ENCODE measurements at regions of chr10 and their contacts with region 1.

Region 1: DNA sequence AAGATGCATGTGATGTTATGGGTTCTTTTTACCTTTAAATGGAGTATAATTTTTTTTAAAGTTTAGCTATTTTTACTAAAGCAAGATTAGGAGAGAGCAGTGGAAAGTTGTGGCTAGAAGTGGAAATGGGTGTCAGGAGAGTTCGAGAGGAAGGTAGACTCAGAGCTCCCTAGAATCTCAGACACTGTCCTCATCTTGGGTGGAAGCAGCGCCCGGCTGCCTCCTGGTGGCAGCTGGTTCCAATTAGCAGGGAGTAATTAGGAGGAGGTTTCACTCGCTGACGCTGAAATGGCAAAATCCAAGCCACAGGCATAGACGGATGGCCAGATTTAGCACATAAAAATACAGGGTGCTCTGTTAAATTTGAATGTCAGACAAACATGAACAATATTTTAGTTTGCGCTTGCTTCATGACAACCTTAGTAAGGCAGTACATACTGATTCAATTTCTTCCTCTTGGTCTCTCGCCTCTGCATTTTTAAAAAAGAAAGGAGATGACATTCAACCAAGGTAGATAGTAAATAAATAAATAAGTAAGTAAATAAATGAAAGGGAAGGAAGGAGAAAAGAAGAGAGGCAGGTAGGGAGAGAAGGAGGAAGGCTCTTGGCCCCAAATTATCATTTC is 58.5 kb downstream of the LGI1 start:
- DNase-seq: peak; percentile 66
- H3K4me3 ChIP-seq: peak overlapping the region; percentile 24 to 50; a peak in 3 of 4 replicates
- H3K27ac ChIP-seq: peak overlapping the region in 1 of 2 experiments; percentile 95; a peak in 3 of 4 replicates
- H3K4me1 ChIP-seq: peaks cover 0 to 30% of the 10 kb centered on the region in 2 experiments; a peak in 3 of 4 replicates
- H3K27me3 ChIP-seq: no peaks in the 10 kb centered on the region
- CTCF ChIP-seq: peak; percentile 66
- EP300 ChIP-seq: peak in 1 of 2 experiments; percentile 54; a peak in 2 of 4 replicates
- RAD21 ChIP-seq: peak; percentile 58

Region 2: GRCh38 chr10:93503075-93503474 is 313.2 kb before region 1 on chr10:
- CTCF ChIA-PET with region 1: no interaction called
- POLR2A ChIA-PET with region 1: no interaction called
- DNase-seq: no peak
- H3K4me3 ChIP-seq: no peak overlapping the region
- H3K27ac ChIP-seq: 0 out of 4 replicates have a peak overlapping the region, but pooled peaks of 1 of the 2 experiments have one; percentile 8
- H3K4me1 ChIP-seq: peaks cover 0 to 4% of the 10 kb centered on the region in 2 experiments; a peak in 3 of 4 replicates
- H3K27me3 ChIP-seq: no peaks in the 10 kb centered on the region
- CTCF ChIP-seq: no peak
- EP300 ChIP-seq: no peak
- RAD21 ChIP-seq: no peak

Region 3: DNA sequence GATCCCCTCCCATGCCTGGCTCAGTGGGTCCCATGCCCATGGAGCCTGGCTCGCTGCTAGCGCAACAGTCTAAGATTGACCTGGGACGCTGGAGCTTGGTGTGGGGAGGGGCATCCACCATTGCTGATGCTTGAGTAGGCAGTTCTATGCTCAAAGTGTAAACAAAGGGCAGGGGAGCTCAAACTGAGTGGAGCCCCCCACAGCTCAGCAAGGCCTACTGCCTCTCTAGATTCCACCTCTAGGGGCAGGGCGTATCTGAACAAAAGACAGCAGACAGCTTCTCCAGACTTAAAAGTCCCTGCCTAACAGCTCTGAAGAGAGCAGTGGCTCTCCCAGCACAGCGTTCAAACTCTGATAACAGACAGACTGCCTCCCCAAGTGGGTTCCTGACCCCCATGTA is 280.9 kb before region 1 on chr10:
- CTCF ChIA-PET with region 1: no interaction called
- POLR2A ChIA-PET with region 1: no interaction called
- DNase-seq: no peak
- H3K4me3 ChIP-seq: no peak overlapping the region
- H3K27ac ChIP-seq: no peak overlapping the region
- H3K4me1 ChIP-seq: no peaks in the 10 kb centered on the region
- H3K27me3 ChIP-seq: no peaks in the 10 kb centered on the region
- CTCF ChIP-seq: no peak
- EP300 ChIP-seq: no peak
- RAD21 ChIP-seq: no peak

Region 4: GRCh38 chr10:93554760-93555432 is 261.3 kb before region 1 on chr10:
- CTCF ChIA-PET with region 1: interaction called, 18 read pairs
- POLR2A ChIA-PET with region 1: no interaction called
- DNase-seq: peak; percentile 79
- H3K4me3 ChIP-seq: no peak overlapping the region
- H3K27ac ChIP-seq: no peak overlapping the region
- H3K4me1 ChIP-seq: no peaks in the 10 kb centered on the region
- H3K27me3 ChIP-seq: no peaks in the 10 kb centered on the region
- CTCF ChIP-seq: peak; percentile 67
- EP300 ChIP-seq: no peak
- RAD21 ChIP-seq: peak; percentile 72

Region 5: GRCh38 chr10:93695740-93696139 is 120.5 kb before region 1 on chr10:
- CTCF ChIA-PET with region 1: interaction called, 108 read pairs
- POLR2A ChIA-PET with region 1: no interaction called
- DNase-seq: no peak
- H3K4me3 ChIP-seq: no peak overlapping the region
- H3K27ac ChIP-seq: no peak overlapping the region
- H3K4me1 ChIP-seq: peaks cover 0 to under 1% of the 10 kb centered on the region in 2 experiments; a peak in 2 of 4 replicates
- H3K27me3 ChIP-seq: no peaks in the 10 kb centered on the region
- CTCF ChIP-seq: no peak
- EP300 ChIP-seq: no peak
- RAD21 ChIP-seq: no peak

Region 6: GRCh38 chr10:93702211-93703001 is 113.8 kb before region 1 on chr10 and contains the start of gene FRA10AC1:
- CTCF ChIA-PET with region 1: interaction called, 108 read pairs
- POLR2A ChIA-PET with region 1: interaction called, 22 read pairs
- DNase-seq: peak; percentile 89
- H3K4me3 ChIP-seq: peak within 1 kb of the TSS; percentile 79 to 91
- H3K27ac ChIP-seq: peak within 1 kb of the TSS; percentile 86 to 99
- H3K4me1 ChIP-seq: peaks cover 0 to 4% of the 10 kb centered on the region in 2 experiments; a peak in 3 of 4 replicates
- H3K27me3 ChIP-seq: no peaks in the 10 kb centered on the region
- CTCF ChIP-seq: peak; percentile 69
- EP300 ChIP-seq: peak in 1 of 2 experiments; percentile 73; a peak in 1 of 4 replicates
- RAD21 ChIP-seq: peak; percentile 75
- polyA plus RNA-seq, gene FRA10AC1: 3.9 and 4.1 TPM in 2 replicates

Region 7: GRCh38 chr10:93746844-93747284 is 69.4 kb before region 1 on chr10:
- CTCF ChIA-PET with region 1: interaction called, 28 read pairs
- POLR2A ChIA-PET with region 1: interaction called, 3 read pairs
- DNase-seq: no peak
- H3K4me3 ChIP-seq: no peak overlapping the region; a peak in 1 of 4 replicates
- H3K27ac ChIP-seq: peak overlapping the region in 1 of 2 experiments; percentile 68; a peak in 3 of 4 replicates
- H3K4me1 ChIP-seq: peaks cover 0 to 2% of the 10 kb centered on the region in 2 experiments; a peak in 1 of 4 replicates
- H3K27me3 ChIP-seq: no peaks in the 10 kb centered on the region
- CTCF ChIP-seq: peak; percentile 42
- EP300 ChIP-seq: peak in 1 of 2 experiments; percentile 23; a peak in 1 of 4 replicates
- RAD21 ChIP-seq: peak; percentile 31; the same call in 1 of the 2 replicates

Region 8: GRCh38 chr10:93752761-93753160 is 63.5 kb before region 1 on chr10:
- CTCF ChIA-PET with region 1: interaction called, 28 read pairs
- POLR2A ChIA-PET with region 1: interaction called, 3 read pairs
- DNase-seq: no peak
- H3K4me3 ChIP-seq: no peak overlapping the region
- H3K27ac ChIP-seq: no peak overlapping the region
- H3K4me1 ChIP-seq: peaks cover 0 to 16% of the 10 kb centered on the region in 2 experiments; a peak in 1 of 4 replicates
- H3K27me3 ChIP-seq: no peaks in the 10 kb centered on the region
- CTCF ChIP-seq: no peak
- EP300 ChIP-seq: no peak
- RAD21 ChIP-seq: no peak

Region 9: DNA sequence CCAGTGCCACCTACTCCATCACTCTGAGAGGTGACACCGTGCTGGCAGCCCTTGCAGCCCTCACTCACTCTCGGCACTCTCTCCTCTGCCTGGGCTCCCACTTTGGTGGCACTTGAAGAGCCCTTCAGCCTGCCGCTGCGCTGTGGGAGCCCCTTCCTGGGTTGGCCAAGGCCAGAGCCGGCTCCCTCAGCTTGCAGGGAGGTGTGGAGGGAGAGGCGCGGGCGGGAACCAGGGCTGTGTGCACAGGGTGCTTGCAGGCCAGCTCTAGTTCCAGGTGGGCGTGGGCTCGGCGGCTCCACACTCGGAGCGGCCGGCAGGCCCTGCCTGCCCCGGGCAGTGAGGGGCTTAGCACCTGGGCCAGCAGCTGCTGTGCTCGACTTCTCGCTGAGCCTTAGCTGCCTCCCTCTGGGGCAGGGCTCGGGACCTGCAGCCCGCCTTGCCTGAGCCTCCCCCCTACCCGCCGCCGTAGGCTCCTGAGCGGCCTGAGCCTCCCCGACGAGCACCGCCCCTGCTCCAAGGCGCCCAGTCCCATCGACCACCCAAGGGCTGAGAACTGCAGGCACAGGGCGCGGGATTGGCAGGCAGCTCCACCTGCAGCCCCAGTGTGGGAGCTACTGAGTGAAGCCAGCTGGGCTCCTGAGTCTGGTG is 28.9 kb after region 1 on chr10:
- CTCF ChIA-PET with region 1: interaction called, 10 read pairs
- POLR2A ChIA-PET with region 1: no interaction called
- DNase-seq: no peak
- H3K4me3 ChIP-seq: no peak overlapping the region
- H3K27ac ChIP-seq: no peak overlapping the region
- H3K4me1 ChIP-seq: peaks cover 0 to 3% of the 10 kb centered on the region in 2 experiments; a peak in 1 of 4 replicates
- H3K27me3 ChIP-seq: peaks cover 7% of the 10 kb centered on the region; the same call in 1 of the 2 replicates
- CTCF ChIP-seq: no peak
- EP300 ChIP-seq: no peak
- RAD21 ChIP-seq: no peak

Region 10: DNA sequence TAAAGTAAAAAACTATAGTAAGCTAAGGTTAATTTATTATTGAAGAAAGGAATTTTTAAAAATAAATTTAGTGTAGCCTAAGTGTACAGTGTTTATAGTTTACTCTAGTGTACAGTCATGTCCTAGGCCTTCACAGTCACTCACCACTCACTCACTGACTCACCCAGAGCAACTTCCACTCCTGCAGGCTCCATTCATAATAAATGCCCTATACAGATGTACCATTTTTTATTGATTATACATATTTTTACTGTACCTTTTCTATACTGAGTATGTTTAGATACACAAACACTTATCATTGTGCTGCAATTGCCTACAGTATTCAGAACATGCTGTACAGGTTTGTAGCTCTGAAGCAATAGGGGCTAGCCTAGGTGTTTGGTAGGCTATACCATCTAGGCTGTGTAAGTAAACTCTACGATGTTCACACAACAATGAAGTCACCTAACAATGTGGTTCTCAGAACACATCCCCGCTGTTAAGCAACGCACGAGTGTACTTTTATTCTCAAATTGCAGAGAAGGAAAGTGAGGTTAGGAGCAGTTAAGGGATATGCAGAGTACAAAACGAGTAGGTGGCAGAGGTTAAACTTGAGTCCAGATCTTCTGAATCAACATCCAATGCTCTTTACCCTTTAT is 138.6 kb after region 1 on chr10:
- CTCF ChIA-PET with region 1: no interaction called
- POLR2A ChIA-PET with region 1: no interaction called
- DNase-seq: no peak
- H3K4me3 ChIP-seq: no peak overlapping the region
- H3K27ac ChIP-seq: peak overlapping the region in 1 of 2 experiments; percentile 38; a peak in 1 of 4 replicates
- H3K4me1 ChIP-seq: peaks cover 3 to 5% of the 10 kb centered on the region in 2 experiments; a peak in 2 of 4 replicates
- H3K27me3 ChIP-seq: no peaks in the 10 kb centered on the region
- CTCF ChIP-seq: no peak
- EP300 ChIP-seq: no peak
- RAD21 ChIP-seq: no peak

Measured in SK-N-SH (cell line).